Activated T-helper 1 cell treated with anti-CD3 and anti-CD28 coated beads, Interleukin-12 subunit alpha, Interleukin-12 subunit beta, Interleukin-2, Interleukin-4 antibody, amounts not matched to agents 30 ng/mL and 10 ng/mL and 1 ng/mL, durations not matched to agents 14 hours and 24 hours and 36 hours (primary cell): ENCODE measurements at regions of chr11 and their contacts with region 1.

Region 1: DNA sequence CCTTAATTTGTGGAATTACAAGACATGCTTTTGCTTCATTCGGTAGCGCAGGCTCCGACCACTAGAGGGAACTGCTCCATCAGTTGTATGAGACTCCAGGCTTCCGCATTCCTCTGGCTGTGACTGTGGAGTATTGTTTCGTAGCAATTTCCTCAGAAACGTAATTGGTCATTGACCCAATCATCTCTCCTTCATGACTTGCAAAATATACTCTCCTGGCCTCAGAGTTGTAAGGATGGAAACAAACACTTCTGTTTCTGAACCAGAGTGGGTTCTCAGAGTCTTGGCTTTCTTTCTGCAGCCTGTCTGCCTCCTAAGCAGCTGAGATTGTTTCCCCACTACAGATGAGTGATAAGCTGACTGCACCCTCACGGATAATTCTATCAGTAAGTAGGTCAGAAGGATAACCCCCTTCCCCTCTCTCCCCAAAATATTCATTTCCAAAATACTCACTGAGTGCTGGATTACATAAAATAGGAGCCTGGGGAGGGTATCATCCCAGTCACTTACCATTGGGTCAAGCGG is 146.8 kb upstream of the ZC3H12C start:
- DNase-seq: peak; percentile 47
- H3K4me3 Mint-ChIP-seq: peak overlapping the region; percentile 4
- H3K27ac Mint-ChIP-seq: peak overlapping the region; percentile 50
- H3K4me1 Mint-ChIP-seq: peaks cover 15% of the 10 kb centered on the region
- H3K27me3 Mint-ChIP-seq: peaks cover 12% of the 10 kb centered on the region

Region 2: GRCh38 chr11:109208121-109208520 is 738.3 kb before region 1 on chr11:
- intact Hi-C with region 1: no loop called
- DNase-seq: no peak
- H3K4me3 Mint-ChIP-seq: no peak overlapping the region
- H3K27ac Mint-ChIP-seq: no peak overlapping the region
- H3K4me1 Mint-ChIP-seq: no peaks in the 10 kb centered on the region
- H3K27me3 Mint-ChIP-seq: no peaks in the 10 kb centered on the region

Region 3: GRCh38 chr11:110000031-110000502 is 53.7 kb after region 1 on chr11:
- intact Hi-C with region 1: loop called (anchors 5 kb)
- DNase-seq: no peak
- H3K4me3 Mint-ChIP-seq: no peak overlapping the region
- H3K27ac Mint-ChIP-seq: no peak overlapping the region
- H3K4me1 Mint-ChIP-seq: no peaks in the 10 kb centered on the region
- H3K27me3 Mint-ChIP-seq: peaks cover 6% of the 10 kb centered on the region

Region 4: DNA sequence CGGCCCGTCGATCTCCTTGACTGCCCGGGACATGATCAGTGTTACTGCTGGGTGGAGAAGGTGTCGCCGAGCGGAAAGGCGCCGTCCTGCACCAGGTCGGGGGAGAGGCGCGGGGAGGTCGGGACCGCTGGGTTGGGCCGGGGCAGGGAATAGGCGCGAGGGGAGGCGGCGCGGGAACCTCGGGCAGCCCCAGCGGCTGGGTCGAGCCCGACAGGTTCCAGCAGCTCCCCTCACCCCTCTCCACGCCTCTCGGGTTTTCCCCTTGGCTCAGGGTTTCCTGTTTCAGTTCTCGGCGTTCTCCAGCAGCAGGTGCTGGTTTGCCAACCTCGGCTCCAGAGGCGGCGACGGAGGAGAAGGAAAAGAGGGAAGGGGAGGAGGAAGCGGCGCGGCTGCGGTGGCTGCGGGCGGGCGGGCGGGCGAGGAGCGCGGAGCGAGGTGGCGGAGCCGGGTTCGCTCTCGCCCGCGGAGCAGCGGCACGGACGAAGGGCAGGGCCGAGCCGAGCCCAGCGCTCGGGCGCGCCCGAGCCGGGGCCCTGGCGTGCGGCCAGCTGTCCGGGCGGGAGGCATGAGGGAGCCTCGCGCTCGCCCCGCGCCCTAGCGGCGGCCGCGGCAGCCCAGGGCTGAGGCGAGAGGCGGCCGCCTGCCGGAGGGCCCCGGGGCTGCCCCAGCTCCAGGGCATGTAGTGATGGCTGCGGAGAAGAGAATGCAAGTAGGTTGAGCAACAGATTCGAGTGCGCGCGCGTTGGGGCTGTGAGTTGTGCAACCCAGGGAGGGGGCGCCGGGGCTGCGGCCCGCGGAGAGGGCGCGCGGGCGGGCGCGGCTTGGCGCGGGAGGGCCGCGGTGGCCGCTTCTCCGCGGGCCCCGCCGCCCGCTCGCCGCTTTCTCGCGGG is 146.4 kb after region 1 on chr11 and contains the start of gene ZC3H12C:
- intact Hi-C with region 1: loop called (anchors 1 kb)
- DNase-seq: peak; percentile 47
- H3K4me3 Mint-ChIP-seq: peak within 1 kb of the TSS; percentile 87
- H3K27ac Mint-ChIP-seq: peak within 1 kb of the TSS; percentile 93
- H3K4me1 Mint-ChIP-seq: peaks cover 16% of the 10 kb centered on the region
- H3K27me3 Mint-ChIP-seq: peaks cover 56% of the 10 kb centered on the region
- total RNA-seq, gene ZC3H12C: 5.7 and 6.2 TPM in 2 replicates

Region 5: GRCh38 chr11:110173811-110174644 is 227.6 kb after region 1 on chr11:
- intact Hi-C with region 1: loop called (anchors 2 kb)
- DNase-seq: peak; percentile 25
- H3K4me3 Mint-ChIP-seq: no peak overlapping the region
- H3K27ac Mint-ChIP-seq: no peak overlapping the region
- H3K4me1 Mint-ChIP-seq: peaks cover 15% of the 10 kb centered on the region
- H3K27me3 Mint-ChIP-seq: peaks cover 21% of the 10 kb centered on the region

Region 6: GRCh38 chr11:110251837-110252236 is 305.5 kb after region 1 on chr11:
- intact Hi-C with region 1: loop called (anchors 5 kb)
- DNase-seq: no peak
- H3K4me3 Mint-ChIP-seq: no peak overlapping the region
- H3K27ac Mint-ChIP-seq: peak overlapping the region; percentile 40
- H3K4me1 Mint-ChIP-seq: peaks cover 14% of the 10 kb centered on the region
- H3K27me3 Mint-ChIP-seq: no peaks in the 10 kb centered on the region

Region 7: DNA sequence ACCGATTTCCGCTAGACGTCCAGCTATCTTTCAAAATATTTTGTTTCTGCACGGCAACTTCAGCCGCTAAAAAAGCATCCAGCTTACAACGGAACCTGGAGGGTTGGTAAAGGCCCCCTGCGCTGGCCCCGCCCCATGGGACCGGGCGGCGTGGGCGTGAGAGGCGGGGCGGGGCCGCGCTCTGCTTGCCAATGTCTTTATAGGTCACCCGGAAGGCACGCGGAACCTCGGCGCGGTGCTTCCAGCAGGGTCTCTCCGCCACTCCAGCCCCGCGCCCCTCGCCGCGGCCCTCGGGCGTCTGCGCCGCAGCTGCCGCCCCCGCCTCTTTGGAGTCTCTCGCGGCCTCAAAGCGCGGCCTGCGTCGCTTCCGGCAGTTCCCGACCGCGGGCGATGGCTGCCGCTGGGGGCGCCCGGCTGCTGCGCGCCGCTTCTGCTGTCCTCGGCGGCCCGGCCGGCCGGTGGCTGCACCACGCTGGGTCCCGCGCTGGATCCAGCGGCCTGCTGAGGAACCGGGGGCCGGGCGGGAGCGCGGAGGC is 483.4 kb after region 1 on chr11 and contains the start of gene FDX1:
- intact Hi-C with region 1: loop called (anchors 1 kb)
- DNase-seq: peak; percentile 82
- H3K4me3 Mint-ChIP-seq: peak within 1 kb of the TSS; percentile 99
- H3K27ac Mint-ChIP-seq: peak within 1 kb of the TSS; percentile 98
- H3K4me1 Mint-ChIP-seq: peaks cover 51% of the 10 kb centered on the region
- H3K27me3 Mint-ChIP-seq: no peaks in the 10 kb centered on the region
- total RNA-seq, gene FDX1: 14.2 and 15.9 TPM in 2 replicates